ENCODE measurements at regions of chr5 and their contacts with region 1.

Region 1: DNA sequence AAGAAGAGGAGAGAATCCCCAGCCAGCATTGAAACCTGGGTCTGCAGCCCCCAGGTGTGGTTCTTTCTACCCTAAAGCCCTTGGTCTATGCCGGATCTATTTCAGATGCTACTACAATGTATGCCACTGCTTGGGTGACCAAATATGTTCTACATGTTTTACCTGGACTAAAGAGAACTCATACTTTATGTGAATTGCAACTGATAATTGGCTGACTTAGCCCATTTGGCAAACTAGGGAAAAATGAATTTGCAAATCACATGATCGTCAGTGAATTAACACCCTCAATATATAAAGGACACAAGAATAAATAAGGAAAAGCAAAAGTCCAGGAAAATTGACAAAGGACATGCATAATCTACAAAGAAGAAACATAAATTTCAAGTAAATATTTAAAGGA is 308.8 kb upstream of the IRX2 start:
- DNase-seq: no peak
- H3K4me3 ChIP-seq: no peak overlapping the region
- CTCF ChIP-seq: no peak
- POLR2A ChIP-seq: no peak

Region 2: GRCh38 chr5:1896602-1897376 is 1163.5 kb before region 1 on chr5:
- intact Hi-C with region 1: loop called (anchors 5 kb)
- DNase-seq: no peak
- H3K4me3 ChIP-seq: no peak overlapping the region
- CTCF ChIP-seq: no peak
- POLR2A ChIP-seq: no peak

Region 3: GRCh38 chr5:3300726-3301125 is 240.4 kb after region 1 on chr5:
- intact Hi-C with region 1: no loop called
- DNase-seq: no peak
- H3K4me3 ChIP-seq: no peak overlapping the region
- CTCF ChIP-seq: no peak
- POLR2A ChIP-seq: no peak